ENCODE measurements at regions of chr7 and their contacts with region 1.

Region 1: GRCh38 chr7:26365077-26365900 is 73.6 kb downstream of the SNX10 start:
- DNase-seq: peak; percentile 16 to 84 (median 34)
- ATAC-seq: peak; percentile 86
- H3K4me3 ChIP-seq: no peak overlapping the region
- H3K4me3 Mint-ChIP-seq: no peak overlapping the region
- H3K27ac ChIP-seq: no peak overlapping the region
- H3K27ac Mint-ChIP-seq: no peak overlapping the region
- H3K4me1 ChIP-seq: peaks cover 2% of the 10 kb centered on the region
- H3K4me1 Mint-ChIP-seq: peaks cover 13% of the 10 kb centered on the region
- H3K27me3 ChIP-seq: no peaks in the 10 kb centered on the region
- H3K27me3 Mint-ChIP-seq: no peaks in the 10 kb centered on the region
- CTCF ChIP-seq: peak; percentile 83

Region 2: GRCh38 chr7:25894902-25895791 is 470.1 kb before region 1 on chr7:
- CTCF ChIA-PET with region 1: interaction called, 47 read pairs
- POLR2A ChIA-PET with region 1: interaction called, 20 read pairs
- intact Hi-C with region 1: loop called (anchors 1 kb)
- DNase-seq: peak; percentile 38 to 80 (median 56)
- ATAC-seq: peak; percentile 54
- H3K4me3 ChIP-seq: peak overlapping the region; percentile 9
- H3K4me3 Mint-ChIP-seq: peak overlapping the region; percentile 49
- H3K27ac ChIP-seq: no peak overlapping the region
- H3K27ac Mint-ChIP-seq: no peak overlapping the region
- H3K4me1 ChIP-seq: peaks cover 25% of the 10 kb centered on the region
- H3K4me1 Mint-ChIP-seq: peaks cover 31% of the 10 kb centered on the region
- H3K27me3 ChIP-seq: no peaks in the 10 kb centered on the region
- H3K27me3 Mint-ChIP-seq: no peaks in the 10 kb centered on the region
- CTCF ChIP-seq: peak; percentile 79

Region 3: GRCh38 chr7:26078437-26079336 is 286.6 kb before region 1 on chr7:
- CTCF ChIA-PET with region 1: interaction called, 29 read pairs
- POLR2A ChIA-PET with region 1: interaction called, 4 read pairs
- intact Hi-C with region 1: loop called in 1 of 2 experiments (anchors 1 kb)
- DNase-seq: peak; percentile 69 to 89 (median 80)
- ATAC-seq: peak; percentile 100
- H3K4me3 ChIP-seq: no peak overlapping the region
- H3K4me3 Mint-ChIP-seq: no peak overlapping the region
- H3K27ac ChIP-seq: no peak overlapping the region
- H3K27ac Mint-ChIP-seq: no peak overlapping the region
- H3K4me1 ChIP-seq: peaks cover 4% of the 10 kb centered on the region
- H3K4me1 Mint-ChIP-seq: peaks cover 11% of the 10 kb centered on the region
- H3K27me3 ChIP-seq: peaks cover 5 to 26% of the 10 kb centered on the region in 2 experiments
- H3K27me3 Mint-ChIP-seq: peaks cover 48% of the 10 kb centered on the region
- CTCF ChIP-seq: peak; percentile 80

Region 4: DNA sequence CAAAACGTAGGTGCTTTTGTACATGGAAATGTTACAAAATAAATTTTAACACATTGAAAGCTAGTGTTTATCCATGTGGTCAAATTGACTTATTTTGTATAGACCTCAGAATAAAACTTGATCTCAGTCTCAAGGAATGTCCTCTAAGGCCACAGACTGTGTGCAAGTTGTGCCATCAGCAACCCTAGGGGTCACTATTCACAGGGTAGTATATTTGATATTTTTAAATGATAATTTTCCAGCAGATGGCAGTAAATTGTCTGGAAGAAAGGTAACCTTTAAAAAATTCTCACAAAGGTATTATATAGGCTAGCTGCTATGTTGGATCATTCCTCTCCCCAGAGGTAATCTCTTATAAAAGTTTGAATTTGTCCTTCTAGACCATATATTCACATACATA is 86.5 kb before region 1 on chr7:
- CTCF ChIA-PET with region 1: interaction called, 6 read pairs
- POLR2A ChIA-PET with region 1: interaction called, 4 read pairs
- intact Hi-C with region 1: loop called in 1 of 2 experiments (anchors 2 kb)
- DNase-seq: peak in 4 of 14 experiments; percentile 11 to 59 (median 52)
- ATAC-seq: no peak
- H3K4me3 ChIP-seq: no peak overlapping the region
- H3K4me3 Mint-ChIP-seq: no peak overlapping the region
- H3K27ac ChIP-seq: no peak overlapping the region
- H3K27ac Mint-ChIP-seq: no peak overlapping the region
- H3K4me1 ChIP-seq: peaks cover 12% of the 10 kb centered on the region
- H3K4me1 Mint-ChIP-seq: peaks cover 19% of the 10 kb centered on the region
- H3K27me3 ChIP-seq: no peaks in the 10 kb centered on the region
- H3K27me3 Mint-ChIP-seq: no peaks in the 10 kb centered on the region
- CTCF ChIP-seq: peak; percentile 51

Region 5: GRCh38 chr7:26398756-26399501 is 33.6 kb after region 1 on chr7:
- CTCF ChIA-PET with region 1: no interaction called
- POLR2A ChIA-PET with region 1: no interaction called
- intact Hi-C with region 1: no loop called
- DNase-seq: peak in 4 of 14 experiments; percentile 7 to 48 (median 32)
- ATAC-seq: no peak
- H3K4me3 ChIP-seq: peak overlapping the region; percentile 36
- H3K4me3 Mint-ChIP-seq: peak overlapping the region; percentile 87
- H3K27ac ChIP-seq: no peak overlapping the region
- H3K27ac Mint-ChIP-seq: no peak overlapping the region
- H3K4me1 ChIP-seq: peaks cover 14% of the 10 kb centered on the region
- H3K4me1 Mint-ChIP-seq: peaks cover 11% of the 10 kb centered on the region
- H3K27me3 ChIP-seq: peaks cover 27 to 29% of the 10 kb centered on the region in 2 experiments
- H3K27me3 Mint-ChIP-seq: peaks cover 65% of the 10 kb centered on the region
- CTCF ChIP-seq: no peak

Region 6: GRCh38 chr7:26500749-26501352 is 135.6 kb after region 1 on chr7:
- CTCF ChIA-PET with region 1: no interaction called
- POLR2A ChIA-PET with region 1: no interaction called
- intact Hi-C with region 1: loop called in 1 of 2 experiments (anchors 2 kb)
- DNase-seq: peak in 3 of 14 experiments; percentile 23 to 39 (median 31)
- ATAC-seq: no peak
- H3K4me3 ChIP-seq: no peak overlapping the region
- H3K4me3 Mint-ChIP-seq: no peak overlapping the region
- H3K27ac ChIP-seq: no peak overlapping the region
- H3K27ac Mint-ChIP-seq: no peak overlapping the region
- H3K4me1 ChIP-seq: no peaks in the 10 kb centered on the region
- H3K4me1 Mint-ChIP-seq: no peaks in the 10 kb centered on the region
- H3K27me3 ChIP-seq: peaks cover 3% of the 10 kb centered on the region in 2 experiments
- H3K27me3 Mint-ChIP-seq: peaks cover 8% of the 10 kb centered on the region
- CTCF ChIP-seq: peak; percentile 46

Region 7: GRCh38 chr7:26511866-26512265 is 146.6 kb after region 1 on chr7:
- CTCF ChIA-PET with region 1: no interaction called
- POLR2A ChIA-PET with region 1: no interaction called
- intact Hi-C with region 1: no loop called
- DNase-seq: no peak
- ATAC-seq: no peak
- H3K4me3 ChIP-seq: no peak overlapping the region
- H3K4me3 Mint-ChIP-seq: no peak overlapping the region
- H3K27ac ChIP-seq: no peak overlapping the region
- H3K27ac Mint-ChIP-seq: no peak overlapping the region
- H3K4me1 ChIP-seq: no peaks in the 10 kb centered on the region
- H3K4me1 Mint-ChIP-seq: no peaks in the 10 kb centered on the region
- H3K27me3 ChIP-seq: peaks cover 0 to 3% of the 10 kb centered on the region in 2 experiments
- H3K27me3 Mint-ChIP-seq: peaks cover 15% of the 10 kb centered on the region
- CTCF ChIP-seq: no peak

Measured in CD4-positive, alpha-beta T cell (primary cell).